Naive thymus-derived CD4-positive, alpha-beta T cell (primary cell): ENCODE measurements at regions of chrX and their contacts with region 1.

Region 1: DNA sequence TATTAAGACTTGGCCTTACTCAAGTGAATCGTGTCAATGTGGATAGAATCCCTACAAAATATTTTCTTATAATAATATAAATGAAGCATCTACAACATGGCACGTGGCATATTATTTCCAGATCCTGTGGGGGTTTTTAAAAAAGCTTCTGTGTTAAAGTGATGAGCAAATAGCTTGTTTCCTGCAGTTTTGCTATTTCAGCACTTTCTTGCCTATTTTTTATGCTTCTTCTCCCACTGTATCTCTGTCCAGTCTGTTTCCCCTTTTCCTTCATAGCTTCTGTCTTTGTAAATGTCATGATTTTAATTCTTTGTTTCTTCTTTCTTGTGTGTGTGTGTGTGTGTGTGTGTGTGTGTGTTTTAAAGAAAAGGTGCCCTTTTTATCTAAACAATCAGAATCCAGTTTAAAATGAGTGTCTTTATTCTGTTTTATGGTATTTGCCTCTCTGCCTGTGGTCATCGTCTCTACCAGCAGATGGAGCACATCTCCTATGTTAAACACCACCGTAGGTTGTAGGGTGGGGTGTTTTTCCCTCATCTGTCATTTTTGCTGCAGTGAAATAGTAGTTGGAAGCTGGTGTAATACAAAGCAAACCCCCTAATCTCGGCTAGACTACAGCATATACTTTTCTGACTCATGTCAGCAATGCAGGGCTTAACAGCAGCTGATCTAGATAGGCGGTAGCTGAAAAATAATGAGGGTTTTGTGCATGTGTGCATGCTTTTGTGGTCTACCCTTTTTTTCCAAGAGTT is 33.1 kb downstream of the FTHL17 start:
- DNase-seq: peak in 1 of 9 donors; percentile 9
- ATAC-seq: no peak
- H3K4me3 ChIP-seq: no peak overlapping the region
- H3K4me3 Mint-ChIP-seq: no peak overlapping the region
- H3K27ac ChIP-seq: no peak overlapping the region
- H3K27ac Mint-ChIP-seq: no peak overlapping the region
- H3K4me1 ChIP-seq: no peaks in the 10 kb centered on the region
- H3K4me1 Mint-ChIP-seq: peaks cover 0 to 5% (median 4%) of the 10 kb centered on the region in 7 donors
- H3K27me3 ChIP-seq: no peaks in the 10 kb centered on the region
- H3K27me3 Mint-ChIP-seq: peaks cover 0 to 10% (median 0%) of the 10 kb centered on the region in 5 donors

Region 2: GRCh38 chrX:31070057-31070468 is 31.3 kb after region 1 on chrX:
- CTCF ChIA-PET with region 1: no interaction called
- POLR2A ChIA-PET with region 1: no interaction called
- intact Hi-C with region 1: no loop called
- DNase-seq: no peak
- ATAC-seq: peak; percentile 44
- H3K4me3 ChIP-seq: no peak overlapping the region
- H3K4me3 Mint-ChIP-seq: no peak overlapping the region
- H3K27ac ChIP-seq: no peak overlapping the region
- H3K27ac Mint-ChIP-seq: no peak overlapping the region
- H3K4me1 ChIP-seq: no peaks in the 10 kb centered on the region
- H3K4me1 Mint-ChIP-seq: peaks cover 0 to 16% (median 0%) of the 10 kb centered on the region in 7 donors
- H3K27me3 ChIP-seq: no peaks in the 10 kb centered on the region
- H3K27me3 Mint-ChIP-seq: no peaks in the 10 kb centered on the region

Region 3: DNA sequence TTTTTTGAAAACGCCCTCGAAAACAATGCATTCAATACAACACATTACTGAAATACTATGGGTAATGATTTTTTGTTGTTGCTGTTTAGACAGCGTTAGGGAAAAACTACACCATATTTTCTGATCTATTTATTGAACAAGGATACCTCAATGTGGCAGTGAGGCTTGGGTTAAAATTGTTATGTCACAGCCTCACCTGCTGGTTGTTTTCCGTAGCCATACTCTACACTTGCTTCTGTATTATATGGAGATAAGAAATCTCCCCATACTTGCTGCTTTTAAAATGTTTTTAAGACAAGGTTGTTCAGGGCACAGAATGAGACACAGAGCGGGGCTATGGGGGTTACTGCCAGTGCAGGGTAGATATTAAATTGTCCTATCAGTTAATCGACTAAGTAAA is 254.7 kb after region 1 on chrX:
- CTCF ChIA-PET with region 1: no interaction called
- POLR2A ChIA-PET with region 1: no interaction called
- intact Hi-C with region 1: loop called in 1 of 2 experiments (anchors 2 kb)
- DNase-seq: no peak
- ATAC-seq: no peak
- H3K4me3 ChIP-seq: no peak overlapping the region
- H3K4me3 Mint-ChIP-seq: no peak overlapping the region
- H3K27ac ChIP-seq: no peak overlapping the region
- H3K27ac Mint-ChIP-seq: no peak overlapping the region
- H3K4me1 ChIP-seq: no peaks in the 10 kb centered on the region
- H3K4me1 Mint-ChIP-seq: no peaks in the 10 kb centered on the region
- H3K27me3 ChIP-seq: no peaks in the 10 kb centered on the region
- H3K27me3 Mint-ChIP-seq: peaks cover 0 to 2% (median 0%) of the 10 kb centered on the region in 5 donors

Region 4: DNA sequence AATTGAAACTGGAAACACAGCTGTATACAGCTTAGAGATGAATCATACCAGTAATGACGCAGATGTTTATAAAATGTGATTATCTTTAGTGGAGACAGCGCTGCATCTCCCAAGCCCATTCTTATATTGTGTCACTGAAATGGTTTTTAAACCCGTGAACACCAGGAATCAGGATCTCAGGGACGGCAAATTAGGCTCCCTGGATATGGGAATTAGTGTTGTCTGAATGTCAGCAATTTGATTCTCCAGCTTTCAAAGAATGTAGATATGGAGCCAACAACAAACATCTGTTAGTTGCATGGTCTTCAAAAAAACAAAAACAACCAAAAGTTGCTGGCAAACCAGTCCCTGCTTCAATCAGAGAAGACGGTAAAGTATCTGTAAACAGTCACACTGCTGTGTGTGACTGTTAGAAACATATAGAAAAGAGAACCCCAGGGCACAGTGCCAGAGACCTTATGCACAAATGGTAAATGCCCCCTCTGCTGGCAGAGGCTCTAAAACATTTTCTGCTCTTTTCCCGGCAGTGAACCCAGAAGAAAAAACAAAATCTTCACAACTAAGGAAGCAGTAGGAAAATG is 384.9 kb after region 1 on chrX:
- CTCF ChIA-PET with region 1: no interaction called
- POLR2A ChIA-PET with region 1: no interaction called
- intact Hi-C with region 1: loop called in 1 of 2 experiments (anchors 2 kb)
- DNase-seq: peak in 1 of 9 donors; percentile 15
- ATAC-seq: no peak
- H3K4me3 ChIP-seq: no peak overlapping the region
- H3K4me3 Mint-ChIP-seq: no peak overlapping the region
- H3K27ac ChIP-seq: no peak overlapping the region
- H3K27ac Mint-ChIP-seq: no peak overlapping the region
- H3K4me1 ChIP-seq: no peaks in the 10 kb centered on the region
- H3K4me1 Mint-ChIP-seq: no peaks in the 10 kb centered on the region
- H3K27me3 ChIP-seq: no peaks in the 10 kb centered on the region
- H3K27me3 Mint-ChIP-seq: no peaks in the 10 kb centered on the region